CD4-positive, alpha-beta memory T cell (primary cell): ENCODE measurements at regions of chr9 and their contacts with region 1.

Region 1: GRCh38 chr9:89549031-89549644 is 51.2 kb upstream of the SEMA4D start:
- DNase-seq: peak; percentile 78 to 83 (median 79)
- H3K4me3 ChIP-seq: no peak overlapping the region
- H3K4me3 Mint-ChIP-seq: peak overlapping the region in 4 of 8 donors; percentile 7 to 52 (median 44)
- H3K27ac ChIP-seq: no peak overlapping the region
- H3K27ac Mint-ChIP-seq: peak overlapping the region in 4 of 7 donors; percentile 50 to 79 (median 60)
- H3K4me1 ChIP-seq: peaks cover 18% of the 10 kb centered on the region
- H3K4me1 Mint-ChIP-seq: peaks cover 7 to 20% (median 14%) of the 10 kb centered on the region in 4 donors
- H3K27me3 ChIP-seq: no peaks in the 10 kb centered on the region
- H3K27me3 Mint-ChIP-seq: peaks cover 0 to 1% of the 10 kb centered on the region in 2 donors

Region 2: DNA sequence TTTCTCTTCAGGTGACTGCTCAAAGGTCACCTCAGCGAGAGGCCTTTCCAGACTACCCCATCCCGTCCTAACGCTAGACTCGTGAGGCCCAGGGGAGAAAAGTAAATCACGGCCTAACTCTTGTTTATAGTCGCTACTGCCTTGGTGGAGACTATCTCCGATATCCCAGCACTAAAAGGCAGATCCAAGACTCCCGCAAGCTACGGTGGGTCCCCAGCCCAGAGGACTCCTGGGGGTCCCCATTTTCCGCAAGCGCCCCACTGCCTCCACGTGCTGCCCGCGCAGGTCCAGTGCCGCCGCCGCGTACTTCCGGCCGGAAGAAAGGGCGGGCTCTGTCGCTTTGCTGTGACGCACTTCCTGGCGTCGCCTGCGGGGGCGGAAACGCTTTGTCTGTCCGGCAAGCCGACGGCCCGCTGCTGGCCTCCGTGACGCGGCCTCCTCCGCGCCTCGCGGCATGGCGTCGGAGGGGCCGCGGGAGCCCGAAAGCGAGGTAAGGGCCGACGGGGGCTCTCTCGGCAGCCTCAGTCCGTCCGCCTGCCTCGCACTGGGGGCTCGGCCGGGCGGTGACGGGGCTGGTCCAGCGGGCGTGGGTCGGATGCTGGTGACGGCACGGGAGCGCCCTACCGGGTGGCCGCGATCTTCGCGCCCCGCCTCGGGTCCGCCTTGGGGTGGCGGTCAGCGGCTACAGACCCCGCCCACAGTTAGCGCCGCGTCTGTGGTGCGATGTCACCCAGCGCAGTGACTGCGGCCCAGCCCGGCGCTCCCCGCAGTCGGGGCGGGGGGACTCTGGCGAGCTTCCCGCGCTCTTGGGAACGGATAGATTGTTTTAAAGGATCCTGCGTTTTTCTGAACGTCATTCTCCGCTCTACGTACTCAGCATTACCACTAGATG is 230.8 kb before region 1 on chr9 and contains the start of gene SECISBP2:
- CTCF ChIA-PET with region 1: interaction called, 8 read pairs
- POLR2A ChIA-PET with region 1: interaction called, 7 read pairs
- intact Hi-C with region 1: loop called (anchors 1 kb)
- DNase-seq: peak; percentile 94 to 97 (median 94)
- H3K4me3 ChIP-seq: peak within 1 kb of the TSS; percentile 67 to 76
- H3K4me3 Mint-ChIP-seq: peak within 1 kb of the TSS; percentile 83 to 94 (median 92)
- H3K27ac ChIP-seq: peak within 1 kb of the TSS; percentile 100
- H3K27ac Mint-ChIP-seq: peak within 1 kb of the TSS; percentile 91 to 99 (median 98)
- H3K4me1 ChIP-seq: peaks cover 55% of the 10 kb centered on the region
- H3K4me1 Mint-ChIP-seq: peaks cover 38 to 69% (median 54%) of the 10 kb centered on the region in 4 donors
- H3K27me3 ChIP-seq: no peaks in the 10 kb centered on the region
- H3K27me3 Mint-ChIP-seq: peaks cover 0 to under 1% of the 10 kb centered on the region in 2 donors
- total RNA-seq, gene SECISBP2: 96.5 to 112 TPM

Region 3: GRCh38 chr9:89418882-89419640 is 130.1 kb before region 1 on chr9:
- CTCF ChIA-PET with region 1: interaction called, 34 read pairs
- POLR2A ChIA-PET with region 1: interaction called, 6 read pairs
- intact Hi-C with region 1: no loop called
- DNase-seq: peak; percentile 69 to 86 (median 75)
- H3K4me3 ChIP-seq: peak overlapping the region in 1 of 2 donors; percentile 48
- H3K4me3 Mint-ChIP-seq: peak overlapping the region; percentile 81 to 94 (median 84)
- H3K27ac ChIP-seq: peak overlapping the region; percentile 73
- H3K27ac Mint-ChIP-seq: peak overlapping the region; percentile 83 to 97 (median 97)
- H3K4me1 ChIP-seq: peaks cover 100% of the 10 kb centered on the region
- H3K4me1 Mint-ChIP-seq: peaks cover 69 to 99% (median 80%) of the 10 kb centered on the region in 4 donors
- H3K27me3 ChIP-seq: no peaks in the 10 kb centered on the region
- H3K27me3 Mint-ChIP-seq: no peaks in the 10 kb centered on the region

Region 4: GRCh38 chr9:89455356-89455824 is 93.7 kb before region 1 on chr9:
- CTCF ChIA-PET with region 1: interaction called, 29 read pairs
- POLR2A ChIA-PET with region 1: interaction called, 11 read pairs
- intact Hi-C with region 1: no loop called
- DNase-seq: peak; percentile 50 to 72 (median 63)
- H3K4me3 ChIP-seq: peak overlapping the region in 1 of 2 donors; percentile 22
- H3K4me3 Mint-ChIP-seq: peak overlapping the region; percentile 72 to 90 (median 82)
- H3K27ac ChIP-seq: peak overlapping the region; percentile 68
- H3K27ac Mint-ChIP-seq: peak overlapping the region; percentile 92 to 98 (median 97)
- H3K4me1 ChIP-seq: peaks cover 97% of the 10 kb centered on the region
- H3K4me1 Mint-ChIP-seq: peaks cover 71 to 98% (median 87%) of the 10 kb centered on the region in 4 donors
- H3K27me3 ChIP-seq: no peaks in the 10 kb centered on the region
- H3K27me3 Mint-ChIP-seq: no peaks in the 10 kb centered on the region

Region 5: DNA sequence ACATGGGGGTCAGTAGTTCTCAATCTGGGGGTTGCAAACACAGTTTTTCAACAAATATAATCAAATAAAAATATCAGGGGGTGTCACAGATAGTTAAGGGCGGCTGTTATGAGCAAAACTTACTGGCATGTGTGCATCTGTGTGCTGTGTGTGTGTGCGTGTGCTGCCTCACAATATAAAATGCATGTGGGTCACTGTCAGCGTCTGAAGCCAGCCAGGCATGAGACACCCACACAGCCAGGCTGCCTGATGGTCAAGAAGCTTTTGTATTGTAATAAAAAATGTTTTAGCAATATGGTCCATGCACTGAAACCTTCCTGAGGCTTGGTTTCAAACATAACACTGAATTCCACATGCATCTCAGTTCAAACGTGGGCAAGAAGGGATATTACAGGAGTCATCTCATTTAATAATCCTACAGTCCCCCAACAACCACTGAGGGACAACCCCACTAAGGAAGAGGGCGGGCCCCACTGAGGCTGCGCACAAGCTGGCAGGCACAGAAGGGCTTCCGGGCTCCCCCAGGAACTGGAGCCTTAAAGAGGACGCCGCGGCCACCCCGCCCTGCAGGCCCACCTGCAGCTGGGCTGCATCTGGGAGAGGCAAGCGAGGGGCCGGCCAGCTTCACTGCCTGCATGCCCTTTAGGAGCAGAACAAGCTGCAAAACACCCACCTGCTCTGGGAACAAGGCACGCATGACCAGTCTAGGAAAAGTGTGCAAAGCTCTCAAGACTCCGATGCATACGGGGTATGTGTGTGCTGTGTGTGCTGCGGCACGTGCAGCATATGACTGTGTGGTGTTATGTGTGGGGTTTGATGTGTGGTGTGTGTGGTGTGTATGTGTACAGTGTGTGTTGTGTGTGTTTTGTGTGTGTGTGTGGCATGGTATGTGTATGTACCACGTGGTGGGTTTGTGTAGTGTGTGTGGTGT is 65.3 kb before region 1 on chr9:
- CTCF ChIA-PET with region 1: interaction called, 52 read pairs
- POLR2A ChIA-PET with region 1: interaction called, 46 read pairs
- intact Hi-C with region 1: no loop called
- DNase-seq: peak; percentile 66 to 83 (median 72)
- H3K4me3 ChIP-seq: peak overlapping the region; percentile 50 to 79
- H3K4me3 Mint-ChIP-seq: peak overlapping the region; percentile 92 to 100 (median 98)
- H3K27ac ChIP-seq: peak overlapping the region; percentile 58
- H3K27ac Mint-ChIP-seq: peak overlapping the region; percentile 74 to 99 (median 96)
- H3K4me1 ChIP-seq: peaks cover 89% of the 10 kb centered on the region
- H3K4me1 Mint-ChIP-seq: peaks cover 78 to 95% (median 88%) of the 10 kb centered on the region in 4 donors
- H3K27me3 ChIP-seq: no peaks in the 10 kb centered on the region
- H3K27me3 Mint-ChIP-seq: no peaks in the 10 kb centered on the region

Region 6: DNA sequence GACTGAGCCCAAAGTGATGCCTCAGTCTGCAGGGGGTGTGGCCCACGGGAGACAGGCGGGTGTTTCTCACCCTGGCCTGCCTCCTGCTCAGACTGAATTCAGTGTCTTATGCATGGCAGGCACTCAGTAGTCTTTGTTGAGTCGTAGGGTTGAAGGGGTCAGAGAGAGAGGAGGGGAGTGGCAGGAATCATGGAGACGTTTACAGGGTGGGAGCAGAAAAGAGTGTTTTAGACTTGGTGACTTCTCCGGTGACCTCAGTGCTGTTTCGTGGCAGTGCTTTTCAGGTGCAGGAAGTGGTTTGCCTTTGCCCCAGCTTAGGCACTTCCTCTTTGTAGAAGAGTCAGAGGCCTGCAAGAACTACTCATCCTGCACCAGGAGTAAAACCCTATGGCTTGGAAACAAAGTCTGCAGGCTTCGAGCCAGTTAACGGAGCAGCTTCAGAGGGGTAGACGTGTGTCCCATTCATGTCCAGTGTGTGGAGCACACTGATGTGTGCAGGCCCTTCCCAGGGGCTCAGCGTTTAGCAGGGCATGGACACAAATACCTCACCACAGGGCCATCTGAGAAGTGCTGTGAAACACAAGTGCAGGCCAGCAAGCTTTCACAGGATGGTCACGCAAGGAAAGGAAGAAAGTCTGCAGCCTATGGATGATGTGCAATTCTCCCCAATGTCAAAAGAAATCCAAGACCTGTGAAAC is 26.7 kb before region 1 on chr9:
- CTCF ChIA-PET with region 1: interaction called, 80 read pairs
- POLR2A ChIA-PET with region 1: interaction called, 31 read pairs
- intact Hi-C with region 1: loop called (anchors 1 kb)
- DNase-seq: peak; percentile 84 to 95 (median 86)
- H3K4me3 ChIP-seq: peak overlapping the region; percentile 19 to 30
- H3K4me3 Mint-ChIP-seq: peak overlapping the region; percentile 68 to 90 (median 78)
- H3K27ac ChIP-seq: peak overlapping the region; percentile 60
- H3K27ac Mint-ChIP-seq: peak overlapping the region; percentile 91 to 100 (median 98)
- H3K4me1 ChIP-seq: peaks cover 99% of the 10 kb centered on the region
- H3K4me1 Mint-ChIP-seq: peaks cover 73 to 98% (median 90%) of the 10 kb centered on the region in 4 donors
- H3K27me3 ChIP-seq: no peaks in the 10 kb centered on the region
- H3K27me3 Mint-ChIP-seq: no peaks in the 10 kb centered on the region